ENCODE measurements at regions of chr3 and their contacts with region 1.

Region 1: GRCh38 chr3:66822186-66823008 is 175.7 kb upstream of the KBTBD8 start:
- DNase-seq: peak; percentile 86
- ATAC-seq: peak; percentile 96
- H3K4me3 Mint-ChIP-seq: no peak overlapping the region
- H3K27ac Mint-ChIP-seq: no peak overlapping the region
- H3K4me1 Mint-ChIP-seq: peaks cover 37% of the 10 kb centered on the region
- H3K27me3 Mint-ChIP-seq: no peaks in the 10 kb centered on the region
- CTCF ChIP-seq: peak; percentile 82

Region 2: GRCh38 chr3:66276705-66277274 is 545.6 kb before region 1 on chr3:
- CTCF ChIA-PET with region 1: interaction called, 11 read pairs
- POLR2A ChIA-PET with region 1: no interaction called
- DNase-seq: peak; percentile 60
- ATAC-seq: no peak
- H3K4me3 Mint-ChIP-seq: no peak overlapping the region
- H3K27ac Mint-ChIP-seq: no peak overlapping the region
- H3K4me1 Mint-ChIP-seq: peaks cover 21% of the 10 kb centered on the region
- H3K27me3 Mint-ChIP-seq: no peaks in the 10 kb centered on the region
- CTCF ChIP-seq: peak; percentile 53; the same call in 1 of the 2 replicates

Region 3: DNA sequence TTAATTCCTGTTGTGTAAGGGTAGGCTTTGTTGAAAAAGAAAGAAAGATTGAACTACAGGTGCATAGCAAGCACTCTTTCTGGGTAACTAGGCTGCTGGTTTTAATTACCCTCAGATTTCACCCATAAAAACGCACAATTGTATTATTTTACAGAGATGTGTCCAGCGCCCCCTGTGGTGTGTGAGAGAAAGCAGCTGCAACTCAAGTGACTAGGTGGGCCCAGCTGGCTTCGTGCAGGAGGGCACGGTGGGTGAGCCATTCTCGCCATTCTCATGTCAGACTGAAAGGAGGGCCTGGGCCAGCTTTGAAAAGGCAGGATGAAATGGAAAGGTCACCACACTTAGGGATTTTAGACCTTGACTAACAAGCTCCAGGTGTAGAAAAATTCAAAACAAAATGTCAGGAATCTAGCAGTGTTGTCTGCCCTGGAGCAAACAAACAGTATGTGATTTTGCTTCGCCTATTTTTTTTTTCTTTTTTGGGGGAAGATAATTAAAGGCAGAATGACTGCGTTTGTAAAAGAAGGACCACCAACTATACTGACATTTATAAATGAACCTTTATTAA is 444.1 kb before region 1 on chr3:
- CTCF ChIA-PET with region 1: interaction called, 17 read pairs
- POLR2A ChIA-PET with region 1: no interaction called
- DNase-seq: peak; percentile 67
- ATAC-seq: peak; percentile 81
- H3K4me3 Mint-ChIP-seq: no peak overlapping the region
- H3K27ac Mint-ChIP-seq: peak overlapping the region; percentile 79
- H3K4me1 Mint-ChIP-seq: peaks cover 15% of the 10 kb centered on the region
- H3K27me3 Mint-ChIP-seq: no peaks in the 10 kb centered on the region
- CTCF ChIP-seq: no peak

Region 4: GRCh38 chr3:66803206-66803605 is 19.2 kb before region 1 on chr3:
- CTCF ChIA-PET with region 1: interaction called, 25 read pairs
- POLR2A ChIA-PET with region 1: no interaction called
- DNase-seq: no peak
- ATAC-seq: peak; percentile 89
- H3K4me3 Mint-ChIP-seq: no peak overlapping the region
- H3K27ac Mint-ChIP-seq: no peak overlapping the region
- H3K4me1 Mint-ChIP-seq: peaks cover 20% of the 10 kb centered on the region
- H3K27me3 Mint-ChIP-seq: peaks cover 2% of the 10 kb centered on the region; the same call in 1 of the 2 replicates
- CTCF ChIP-seq: peak; percentile 38

Region 5: GRCh38 chr3:66858656-66859381 is 36.4 kb after region 1 on chr3:
- CTCF ChIA-PET with region 1: interaction called, 24 read pairs
- POLR2A ChIA-PET with region 1: no interaction called
- DNase-seq: peak; percentile 83
- ATAC-seq: peak; percentile 99
- H3K4me3 Mint-ChIP-seq: no peak overlapping the region; the same call in 1 of the 2 replicates
- H3K27ac Mint-ChIP-seq: no peak overlapping the region
- H3K4me1 Mint-ChIP-seq: peaks cover 30% of the 10 kb centered on the region
- H3K27me3 Mint-ChIP-seq: no peaks in the 10 kb centered on the region; the same call in 1 of the 2 replicates
- CTCF ChIP-seq: peak; percentile 49

Region 6: DNA sequence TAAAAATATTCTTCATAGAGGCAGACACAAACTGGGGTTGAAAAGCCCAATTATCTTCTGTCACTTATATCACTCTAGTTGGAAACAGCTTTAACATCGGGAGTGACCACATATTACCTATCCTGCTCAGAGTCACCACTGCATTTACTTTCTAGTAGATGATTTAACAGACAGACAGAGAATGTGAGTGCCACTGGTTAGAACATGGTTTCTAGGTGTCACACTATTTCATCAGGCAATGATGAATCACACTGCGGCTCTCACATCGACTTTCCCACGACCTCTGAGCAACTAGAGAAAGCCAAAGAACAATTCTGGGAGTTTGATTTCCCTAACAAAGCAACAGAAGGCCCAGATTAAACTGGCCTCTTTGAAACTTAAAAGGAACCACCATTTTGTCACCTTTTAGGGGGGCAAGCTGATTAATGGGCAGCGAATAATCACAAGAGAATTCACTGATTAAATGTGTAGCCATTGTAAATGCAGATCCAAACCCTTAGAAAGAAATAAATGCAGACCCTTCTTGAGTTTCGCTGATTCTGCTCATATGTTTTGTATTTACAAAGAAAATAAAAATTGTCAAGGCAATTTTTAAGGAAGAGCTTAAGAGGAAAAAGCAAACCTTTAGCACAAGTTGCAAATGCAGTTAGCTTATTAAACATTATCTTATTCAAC is 63.1 kb after region 1 on chr3:
- CTCF ChIA-PET with region 1: no interaction called
- POLR2A ChIA-PET with region 1: no interaction called
- DNase-seq: no peak
- ATAC-seq: no peak
- H3K4me3 Mint-ChIP-seq: no peak overlapping the region
- H3K27ac Mint-ChIP-seq: no peak overlapping the region
- H3K4me1 Mint-ChIP-seq: peaks cover 20% of the 10 kb centered on the region
- H3K27me3 Mint-ChIP-seq: no peaks in the 10 kb centered on the region; the same call in 1 of the 2 replicates
- CTCF ChIP-seq: no peak

Measured in WTC11 (cell line).